Activated CD4-positive, alpha-beta memory T cell treated with anti-CD3 and anti-CD28 coated beads for 36 hours (primary cell): ENCODE measurements at regions of chr10 and their contacts with region 1.

Region 1: GRCh38 chr10:122267849-122268737 is 3.0 kb upstream of the BTBD16 start:
- DNase-seq: peak; percentile 71
- H3K4me3 Mint-ChIP-seq: no peak overlapping the region
- H3K27ac Mint-ChIP-seq: no peak overlapping the region
- H3K4me1 Mint-ChIP-seq: no peaks in the 10 kb centered on the region
- H3K27me3 Mint-ChIP-seq: peaks cover 18% of the 10 kb centered on the region

Region 2: GRCh38 chr10:122279725-122280141 is 11.6 kb after region 1 on chr10:
- CTCF ChIA-PET with region 1: interaction called, 21 read pairs
- POLR2A ChIA-PET with region 1: no interaction called
- intact Hi-C with region 1: no loop called
- DNase-seq: peak; percentile 53
- H3K4me3 Mint-ChIP-seq: no peak overlapping the region
- H3K27ac Mint-ChIP-seq: no peak overlapping the region
- H3K4me1 Mint-ChIP-seq: peaks cover 4% of the 10 kb centered on the region
- H3K27me3 Mint-ChIP-seq: peaks cover 18% of the 10 kb centered on the region

Region 3: DNA sequence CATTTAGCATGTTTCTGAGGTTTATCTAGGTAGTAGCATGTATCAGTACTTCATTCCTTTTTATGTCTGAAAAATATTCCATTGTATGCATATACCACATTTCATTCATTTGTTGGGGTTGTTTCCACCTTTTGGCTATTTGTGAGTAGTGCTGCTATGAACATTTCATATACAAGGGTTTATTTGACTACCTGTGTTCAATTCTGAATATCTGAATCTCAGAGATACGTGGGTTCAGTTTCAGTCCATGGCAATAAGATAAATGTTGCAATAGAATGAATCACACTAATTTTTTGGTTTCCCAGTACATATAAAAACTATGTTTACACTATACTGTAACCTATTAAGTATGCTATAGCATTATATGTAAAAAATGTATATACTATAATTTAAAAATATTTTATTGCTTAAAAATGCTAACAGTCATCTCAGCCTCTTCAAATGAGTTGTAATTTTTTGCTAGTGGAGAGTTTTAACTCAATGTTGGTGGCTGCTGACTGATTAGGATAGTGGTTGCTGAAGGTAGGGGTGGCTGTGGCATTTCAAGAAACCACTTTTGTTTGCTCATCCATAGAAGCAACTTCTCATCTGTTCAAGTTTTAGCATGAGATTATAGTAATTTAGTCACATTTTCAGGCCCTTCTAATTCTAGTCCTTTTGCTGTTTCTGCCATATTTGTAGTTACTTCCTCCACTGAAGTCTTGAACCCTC is 120.3 kb after region 1 on chr10:
- CTCF ChIA-PET with region 1: no interaction called
- POLR2A ChIA-PET with region 1: no interaction called
- intact Hi-C with region 1: no loop called
- DNase-seq: peak; percentile 74
- H3K4me3 Mint-ChIP-seq: no peak overlapping the region
- H3K27ac Mint-ChIP-seq: peak overlapping the region; percentile 60
- H3K4me1 Mint-ChIP-seq: peaks cover 60% of the 10 kb centered on the region
- H3K27me3 Mint-ChIP-seq: no peaks in the 10 kb centered on the region